ENCODE measurements at regions of chr2 and their contacts with region 1.

Region 1: GRCh38 chr2:113390124-113390849 is 47.2 kb upstream of the ZNG1B start:
- DNase-seq: peak; percentile 78
- H3K4me3 Mint-ChIP-seq: no peak overlapping the region
- H3K27ac Mint-ChIP-seq: no peak overlapping the region
- H3K4me1 Mint-ChIP-seq: no peaks in the 10 kb centered on the region
- H3K27me3 Mint-ChIP-seq: no peaks in the 10 kb centered on the region
- CTCF ChIP-seq: peak; percentile 85

Region 2: GRCh38 chr2:112481050-112481527 is 909.2 kb before region 1 on chr2:
- CTCF ChIA-PET with region 1: no interaction called
- POLR2A ChIA-PET with region 1: no interaction called
- intact Hi-C with region 1: no loop called
- DNase-seq: peak; percentile 87
- H3K4me3 Mint-ChIP-seq: peak overlapping the region; percentile 88
- H3K27ac Mint-ChIP-seq: peak overlapping the region; percentile 86
- H3K4me1 Mint-ChIP-seq: peaks cover 15% of the 10 kb centered on the region
- H3K27me3 Mint-ChIP-seq: no peaks in the 10 kb centered on the region
- CTCF ChIP-seq: peak; percentile 86

Region 3: GRCh38 chr2:113015646-113016045 is 374.6 kb before region 1 on chr2:
- CTCF ChIA-PET with region 1: no interaction called
- POLR2A ChIA-PET with region 1: no interaction called
- intact Hi-C with region 1: no loop called
- DNase-seq: no peak
- H3K4me3 Mint-ChIP-seq: no peak overlapping the region
- H3K27ac Mint-ChIP-seq: no peak overlapping the region
- H3K4me1 Mint-ChIP-seq: no peaks in the 10 kb centered on the region
- H3K27me3 Mint-ChIP-seq: peaks cover 32% of the 10 kb centered on the region
- CTCF ChIP-seq: no peak

Region 4: GRCh38 chr2:113025737-113026136 is 364.6 kb before region 1 on chr2:
- CTCF ChIA-PET with region 1: no interaction called
- POLR2A ChIA-PET with region 1: no interaction called
- intact Hi-C with region 1: no loop called
- DNase-seq: no peak
- H3K4me3 Mint-ChIP-seq: no peak overlapping the region
- H3K27ac Mint-ChIP-seq: no peak overlapping the region
- H3K4me1 Mint-ChIP-seq: no peaks in the 10 kb centered on the region
- H3K27me3 Mint-ChIP-seq: peaks cover 99% of the 10 kb centered on the region
- CTCF ChIP-seq: no peak

Region 5: DNA sequence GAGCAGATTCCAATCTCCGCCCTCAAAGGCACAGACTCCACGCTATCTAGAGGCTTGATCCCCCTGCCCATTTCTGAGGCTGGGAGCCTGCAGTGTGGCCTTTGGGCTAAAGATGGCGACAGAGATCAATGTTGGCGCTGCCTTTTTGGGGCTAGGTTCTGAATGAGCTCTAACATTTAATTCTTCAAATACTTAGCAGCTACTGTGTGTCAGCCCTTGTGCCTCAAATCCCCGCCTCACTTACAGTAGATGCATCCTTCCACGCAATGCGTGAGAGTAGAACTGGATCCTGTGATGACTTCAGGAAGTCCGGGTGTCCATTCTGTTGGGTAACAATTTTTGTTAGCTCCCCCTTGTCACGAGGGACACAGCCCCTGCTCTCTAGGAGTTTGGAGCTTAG is 310.2 kb before region 1 on chr2:
- CTCF ChIA-PET with region 1: interaction called, 8 read pairs
- POLR2A ChIA-PET with region 1: no interaction called
- intact Hi-C with region 1: loop called (anchors 5 kb)
- DNase-seq: peak; percentile 62
- H3K4me3 Mint-ChIP-seq: no peak overlapping the region
- H3K27ac Mint-ChIP-seq: no peak overlapping the region
- H3K4me1 Mint-ChIP-seq: peaks cover 36% of the 10 kb centered on the region
- H3K27me3 Mint-ChIP-seq: no peaks in the 10 kb centered on the region
- CTCF ChIP-seq: peak; percentile 86

Region 6: GRCh38 chr2:113211226-113212105 is 178.8 kb before region 1 on chr2:
- CTCF ChIA-PET with region 1: interaction called, 74 read pairs
- POLR2A ChIA-PET with region 1: no interaction called
- intact Hi-C with region 1: no loop called
- DNase-seq: peak; percentile 78
- H3K4me3 Mint-ChIP-seq: no peak overlapping the region
- H3K27ac Mint-ChIP-seq: peak overlapping the region; percentile 92
- H3K4me1 Mint-ChIP-seq: peaks cover 30% of the 10 kb centered on the region
- H3K27me3 Mint-ChIP-seq: no peaks in the 10 kb centered on the region
- CTCF ChIP-seq: no peak

Region 7: DNA sequence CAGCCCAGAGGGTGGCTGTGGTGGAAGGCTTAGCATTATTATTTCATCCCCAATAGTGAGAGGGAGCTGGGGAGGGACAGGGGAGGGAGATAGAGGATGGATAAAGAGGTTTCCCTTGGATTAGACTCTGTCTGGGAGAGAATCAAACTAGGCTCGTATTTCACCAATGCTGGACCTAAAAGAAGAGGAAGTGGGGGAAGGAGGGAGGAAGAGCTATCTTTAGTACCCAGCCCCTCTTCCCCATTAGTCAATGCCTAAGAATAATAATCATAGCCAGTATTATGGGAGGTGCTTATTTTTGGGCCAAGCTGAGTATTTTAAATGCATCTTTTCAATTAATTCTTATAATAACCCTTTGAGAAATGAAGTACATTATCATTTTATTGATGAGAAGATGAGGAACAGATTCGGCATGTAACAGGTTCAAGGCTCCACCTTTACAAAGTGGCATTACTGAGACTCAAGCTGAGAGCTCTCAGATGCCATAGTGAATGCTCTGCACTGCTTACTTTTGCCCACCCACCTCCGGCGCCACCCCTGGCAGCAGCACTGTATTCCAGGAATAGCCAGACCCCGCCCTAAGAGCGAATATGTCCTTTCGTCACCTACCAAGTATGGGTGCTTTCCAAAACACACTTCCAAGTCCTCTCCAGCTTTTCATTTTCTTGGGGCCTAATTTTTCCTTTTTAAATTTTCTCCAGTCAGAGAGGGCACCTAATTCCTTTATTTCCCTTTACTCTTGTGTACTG is 132.6 kb before region 1 on chr2:
- CTCF ChIA-PET with region 1: interaction called, 11 read pairs
- POLR2A ChIA-PET with region 1: no interaction called
- intact Hi-C with region 1: no loop called
- DNase-seq: no peak
- H3K4me3 Mint-ChIP-seq: no peak overlapping the region
- H3K27ac Mint-ChIP-seq: no peak overlapping the region
- H3K4me1 Mint-ChIP-seq: peaks cover 9% of the 10 kb centered on the region
- H3K27me3 Mint-ChIP-seq: no peaks in the 10 kb centered on the region
- CTCF ChIP-seq: no peak

Region 8: GRCh38 chr2:113304702-113305101 is 85.6 kb before region 1 on chr2:
- CTCF ChIA-PET with region 1: no interaction called
- POLR2A ChIA-PET with region 1: no interaction called
- intact Hi-C with region 1: no loop called
- DNase-seq: no peak
- H3K4me3 Mint-ChIP-seq: no peak overlapping the region
- H3K27ac Mint-ChIP-seq: no peak overlapping the region
- H3K4me1 Mint-ChIP-seq: peaks cover 16% of the 10 kb centered on the region
- H3K27me3 Mint-ChIP-seq: no peaks in the 10 kb centered on the region
- CTCF ChIP-seq: no peak

Region 9: GRCh38 chr2:113376913-113377445 is 13.3 kb before region 1 on chr2:
- CTCF ChIA-PET with region 1: interaction called, 10 read pairs
- POLR2A ChIA-PET with region 1: no interaction called
- intact Hi-C with region 1: no loop called
- DNase-seq: no peak
- H3K4me3 Mint-ChIP-seq: no peak overlapping the region
- H3K27ac Mint-ChIP-seq: no peak overlapping the region
- H3K4me1 Mint-ChIP-seq: no peaks in the 10 kb centered on the region
- H3K27me3 Mint-ChIP-seq: no peaks in the 10 kb centered on the region
- CTCF ChIP-seq: no peak